ENCODE measurements at regions of chr20 and their contacts with region 1.

Region 1: DNA sequence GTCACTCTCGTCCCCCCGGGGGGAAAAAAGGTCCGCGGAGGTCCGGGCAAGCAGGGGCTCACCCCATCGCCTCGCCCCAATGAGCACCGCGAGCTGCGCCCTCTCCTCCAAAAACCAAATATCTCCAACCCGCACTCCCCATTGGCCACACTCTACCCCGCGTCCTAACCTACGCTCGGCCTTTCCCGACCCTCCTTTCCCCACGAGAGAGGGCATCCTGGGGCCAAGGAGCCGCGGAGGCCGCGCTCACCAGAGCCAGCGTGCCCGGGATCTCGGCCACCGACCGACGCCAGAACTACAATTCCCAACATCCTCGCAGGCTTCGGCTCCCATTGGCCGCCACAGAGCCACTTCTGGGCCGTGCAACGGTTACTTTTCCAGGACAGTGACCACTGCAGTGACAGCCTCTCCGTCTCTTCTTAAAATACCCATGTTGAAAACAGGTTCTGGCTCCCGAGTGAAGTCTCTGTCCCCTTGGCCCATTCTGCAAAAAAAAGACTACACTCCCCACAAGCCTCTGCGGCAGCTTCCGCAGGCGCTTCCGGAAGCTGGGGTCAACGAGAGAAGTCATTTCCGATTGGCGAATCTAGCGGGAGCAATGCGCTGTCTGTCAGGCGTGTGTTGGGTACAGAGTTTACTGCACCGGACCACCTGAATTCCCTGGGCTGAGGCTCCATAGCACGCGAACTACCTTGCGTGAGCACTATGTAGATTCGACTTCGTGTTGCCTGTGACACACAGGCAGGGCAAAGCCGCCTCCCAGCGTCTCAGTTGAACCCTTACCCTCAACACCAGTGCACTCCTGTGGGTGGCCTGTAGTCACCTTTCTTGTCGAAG is at the start of gene ZNF343:
- DNase-seq: peak; percentile 86 to 91 (median 88)
- H3K4me3 ChIP-seq: peak within 1 kb of the TSS; percentile 44 to 96 (median 90)
- H3K27ac ChIP-seq: peak within 1 kb of the TSS; percentile 80 to 86
- H3K4me1 ChIP-seq: peaks cover 0 to 19% (median 16%) of the 10 kb centered on the region in 4 experiments
- H3K27me3 ChIP-seq: no peaks in the 10 kb centered on the region

Region 2: DNA sequence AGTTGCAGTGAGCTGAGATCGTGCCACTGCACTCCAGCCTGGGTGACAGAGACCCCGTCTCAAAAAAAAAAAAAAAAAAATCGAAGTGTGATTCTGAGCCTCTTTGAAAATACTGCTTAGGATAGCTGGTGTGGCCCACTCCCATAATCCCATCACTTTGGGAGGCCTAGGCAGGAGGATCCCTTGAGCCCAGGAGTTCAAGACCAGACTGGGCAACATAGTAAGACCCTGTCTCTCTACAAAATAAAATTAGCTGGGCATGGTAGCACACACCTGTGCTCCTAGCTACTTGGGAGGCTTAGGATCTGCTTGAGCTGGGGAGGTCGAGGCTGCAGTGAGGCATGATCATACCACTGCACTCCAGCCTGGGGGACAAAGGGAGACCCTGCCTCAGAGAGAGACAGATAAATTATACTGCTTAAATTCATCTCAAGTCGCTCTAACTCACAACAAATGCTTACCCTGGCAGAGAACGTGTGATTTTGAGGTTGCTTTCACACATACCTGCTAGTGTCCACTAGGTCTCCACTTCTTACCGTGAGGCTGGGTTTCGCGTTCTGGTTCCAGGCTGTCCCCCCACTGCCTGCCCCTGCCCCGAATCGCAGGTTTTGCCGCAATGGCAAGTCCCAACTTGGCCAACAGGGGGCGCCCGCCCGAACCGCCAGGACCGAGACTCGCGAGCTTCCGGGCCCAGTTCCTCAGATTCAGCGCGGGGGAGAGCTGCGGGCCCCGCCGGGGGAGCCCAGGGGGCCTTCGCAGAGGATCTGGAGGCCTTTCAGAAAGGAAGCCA is 15.3 kb after region 1 on chr20:
- CTCF ChIA-PET with region 1: interaction called, 37 read pairs
- POLR2A ChIA-PET with region 1: interaction called, 3 read pairs
- DNase-seq: peak; percentile 86 to 95 (median 95)
- H3K4me3 ChIP-seq: peak overlapping the region; percentile 80 to 98 (median 85)
- H3K27ac ChIP-seq: peak overlapping the region; percentile 40 to 87
- H3K4me1 ChIP-seq: peaks cover 0 to 17% (median 13%) of the 10 kb centered on the region in 4 experiments
- H3K27me3 ChIP-seq: peaks cover 0 to 13% (median 2%) of the 10 kb centered on the region in 5 experiments